Psoas muscle (tissue), 8 donors: ENCODE measurements at regions of chr2 and their contacts with region 1.

Region 1: DNA sequence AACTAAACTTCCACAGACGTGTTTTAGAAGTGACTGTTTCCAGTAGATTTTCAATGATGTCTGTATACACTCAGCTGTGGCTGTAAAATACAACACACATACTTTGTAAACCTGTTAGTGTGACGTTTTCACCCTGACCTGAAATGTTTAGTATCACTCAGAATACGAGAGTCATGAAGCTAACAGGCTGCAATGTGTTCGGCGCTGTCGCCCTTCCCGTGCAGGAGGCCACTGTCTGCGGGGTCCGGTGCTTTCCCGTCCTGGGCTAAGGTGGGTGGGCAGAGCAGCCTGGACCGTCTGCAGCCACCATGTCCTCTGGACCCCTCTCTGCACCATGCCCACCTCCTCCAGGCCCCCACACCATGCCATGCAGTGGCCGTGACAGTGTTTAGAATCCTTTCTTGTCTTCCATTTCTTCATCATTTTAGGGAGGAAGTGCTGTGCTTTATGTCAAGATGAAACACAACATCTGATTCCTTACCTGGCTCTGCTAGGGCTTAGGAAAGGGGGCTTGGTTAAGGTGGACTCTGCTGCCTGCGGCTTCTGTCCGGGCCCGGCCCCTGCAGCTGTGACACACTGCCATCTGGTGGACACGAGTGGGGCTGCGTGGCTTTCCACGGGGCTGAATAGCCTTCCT is 53.8 kb upstream of the RBM44 start:
- DNase-seq: peak; percentile 75 to 86
- ATAC-seq: peak; percentile 81 to 89 (median 86)
- H3K4me3 ChIP-seq: no peak overlapping the region
- H3K27ac ChIP-seq: peak overlapping the region; percentile 59
- H3K4me1 ChIP-seq: peaks cover 48% of the 10 kb centered on the region
- H3K27me3 ChIP-seq: no peaks in the 10 kb centered on the region
- CTCF ChIP-seq: peak; percentile 99

Region 2: GRCh38 chr2:237512774-237513466 is 231.8 kb before region 1 on chr2:
- intact Hi-C with region 1: loop called (anchors 5 to 10 kb)
- DNase-seq: peak; percentile 88 to 92
- ATAC-seq: peak; percentile 81 to 89 (median 82)
- H3K4me3 ChIP-seq: no peak overlapping the region
- H3K27ac ChIP-seq: peak overlapping the region; percentile 72
- H3K4me1 ChIP-seq: peaks cover 27% of the 10 kb centered on the region
- H3K27me3 ChIP-seq: no peaks in the 10 kb centered on the region
- CTCF ChIP-seq: peak; percentile 92

Region 3: DNA sequence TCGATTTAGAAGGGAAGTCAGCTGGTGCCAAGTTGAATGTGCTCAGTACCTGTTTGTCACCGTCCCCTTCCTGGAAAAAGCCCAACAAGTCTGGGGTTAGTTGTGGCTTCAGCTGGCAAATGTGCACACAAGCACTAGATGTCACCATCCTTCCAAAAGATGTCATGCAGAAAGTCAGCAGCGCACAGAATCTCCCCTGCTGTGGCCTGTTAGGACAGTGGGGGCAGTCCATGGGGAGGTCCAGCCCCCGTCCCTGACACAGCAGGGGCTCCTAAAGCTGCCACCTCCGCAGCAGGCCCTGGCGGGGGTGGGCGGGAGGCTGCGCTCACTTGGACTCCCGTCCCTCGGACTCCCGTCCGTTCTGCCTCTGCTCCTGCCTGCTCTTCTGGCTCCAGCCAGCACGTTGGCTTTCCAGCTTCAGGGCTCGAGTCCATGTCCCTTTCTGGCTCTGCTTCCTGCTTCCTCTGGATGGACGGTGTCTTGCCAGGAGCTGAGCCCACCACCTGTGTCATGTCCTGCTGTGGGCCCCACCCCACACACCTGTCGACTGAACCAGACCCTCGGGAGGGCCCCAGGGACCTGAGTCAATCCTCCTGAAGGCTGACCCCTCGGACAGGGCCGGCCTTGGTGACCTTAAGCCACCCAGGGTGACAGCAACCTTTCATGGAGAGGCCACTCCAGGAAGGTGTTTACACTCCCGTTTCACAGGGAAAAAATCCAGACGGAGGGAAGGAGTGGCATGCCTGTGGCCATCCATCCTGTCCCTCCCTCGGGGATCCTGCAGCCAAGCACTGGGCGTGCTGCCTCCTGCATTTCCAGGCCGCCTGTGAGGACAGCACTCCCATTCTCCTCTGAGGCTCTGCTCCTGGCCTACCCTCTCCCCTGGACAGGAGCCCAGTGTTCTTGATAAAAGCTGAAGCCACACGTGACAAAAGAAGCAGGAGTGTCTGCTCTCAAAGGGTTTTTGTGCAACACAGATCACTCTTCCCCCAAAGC is 162.7 kb before region 1 on chr2:
- intact Hi-C with region 1: loop called (anchors 2 to 5 kb)
- DNase-seq: peak; percentile 51 to 77
- ATAC-seq: peak; percentile 84 to 96 (median 90)
- H3K4me3 ChIP-seq: peak overlapping the region; percentile 36
- H3K27ac ChIP-seq: peak overlapping the region; percentile 44
- H3K4me1 ChIP-seq: peaks cover 7% of the 10 kb centered on the region
- H3K27me3 ChIP-seq: no peaks in the 10 kb centered on the region
- CTCF ChIP-seq: peak; percentile 52

Region 4: GRCh38 chr2:237590272-237591140 is 154.2 kb before region 1 on chr2 and contains the start of gene RAB17:
- intact Hi-C with region 1: loop called in 1 of 2 experiments (anchors 5 kb)
- DNase-seq: no peak
- ATAC-seq: peak; percentile 31 to 86 (median 73)
- H3K4me3 ChIP-seq: no peak within 1 kb of the TSS
- H3K27ac ChIP-seq: no peak within 1 kb of the TSS
- H3K4me1 ChIP-seq: peaks cover 9% of the 10 kb centered on the region
- H3K27me3 ChIP-seq: no peaks in the 10 kb centered on the region
- CTCF ChIP-seq: no peak
- total RNA-seq, gene RAB17: 1.1 to 1.5 (median 1.2) TPM

Region 5: GRCh38 chr2:237603718-237604362 is 140.9 kb before region 1 on chr2:
- intact Hi-C with region 1: loop called in 1 of 2 experiments (anchors 5 kb)
- DNase-seq: no peak
- ATAC-seq: no peak
- H3K4me3 ChIP-seq: no peak overlapping the region
- H3K27ac ChIP-seq: peak overlapping the region; percentile 16
- H3K4me1 ChIP-seq: peaks cover 21% of the 10 kb centered on the region
- H3K27me3 ChIP-seq: no peaks in the 10 kb centered on the region
- CTCF ChIP-seq: no peak

Region 6: DNA sequence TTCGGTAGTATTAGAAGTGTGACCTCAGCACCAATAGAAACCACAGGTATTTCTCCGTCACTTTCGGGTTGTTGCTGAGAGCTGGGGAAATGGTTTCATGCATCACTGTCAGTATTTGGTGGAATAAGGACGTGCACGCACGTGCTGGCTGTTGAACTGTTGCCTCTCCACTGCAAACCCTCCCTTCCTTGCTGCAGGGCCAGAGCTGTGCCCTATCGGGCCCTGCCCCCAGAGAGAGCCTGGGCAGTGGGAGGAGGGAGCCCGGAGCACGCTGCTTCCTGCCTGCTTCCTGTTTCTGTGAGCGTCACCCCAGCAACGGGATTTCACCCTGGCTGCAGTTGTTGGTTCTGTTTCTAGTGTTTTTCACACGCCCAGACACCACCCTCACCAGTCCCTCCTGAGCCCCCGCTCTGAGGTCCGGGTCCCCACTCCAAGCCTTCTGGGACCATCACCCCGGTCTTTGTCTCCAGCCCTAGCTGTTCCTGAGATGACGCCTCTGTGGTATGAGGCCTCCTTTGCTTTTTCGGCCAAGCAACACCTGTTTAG is 69.9 kb before region 1 on chr2:
- intact Hi-C with region 1: loop called (anchors 1 to 2 kb)
- DNase-seq: peak; percentile 81 to 87
- ATAC-seq: peak; percentile 69 to 77 (median 75)
- H3K4me3 ChIP-seq: peak overlapping the region; percentile 54
- H3K27ac ChIP-seq: peak overlapping the region; percentile 93
- H3K4me1 ChIP-seq: peaks cover 80% of the 10 kb centered on the region
- H3K27me3 ChIP-seq: no peaks in the 10 kb centered on the region
- CTCF ChIP-seq: peak; percentile 7

Region 7: GRCh38 chr2:237931205-237931721 is 186.5 kb after region 1 on chr2:
- intact Hi-C with region 1: no loop called
- DNase-seq: no peak
- ATAC-seq: peak in 1 of 4 donors; percentile 2
- H3K4me3 ChIP-seq: no peak overlapping the region
- H3K27ac ChIP-seq: no peak overlapping the region
- H3K4me1 ChIP-seq: no peaks in the 10 kb centered on the region
- H3K27me3 ChIP-seq: peaks cover 0 to 2% (median 0%) of the 10 kb centered on the region in 3 donors
- CTCF ChIP-seq: no peak